Activated CD8-positive, alpha-beta memory T cell treated with anti-CD3 and anti-CD28 coated beads, Interleukin-2, amount 10 ng/mL, durations not matched to agents 7 days and 5 days (primary cell): ENCODE measurements at regions of chr16 and their contacts with region 1.

Region 1: GRCh38 chr16:21708533-21709115 is 44.9 kb downstream of the OTOA start:
- DNase-seq: peak; percentile 91
- ATAC-seq: peak; percentile 83
- H3K4me3 Mint-ChIP-seq: no peak overlapping the region
- H3K27ac Mint-ChIP-seq: no peak overlapping the region
- H3K4me1 Mint-ChIP-seq: peaks cover 9% of the 10 kb centered on the region
- H3K27me3 Mint-ChIP-seq: no peaks in the 10 kb centered on the region

Region 2: GRCh38 chr16:21611546-21612384 is 96.9 kb before region 1 on chr16:
- CTCF ChIA-PET with region 1: no interaction called
- DNase-seq: peak; percentile 45
- ATAC-seq: peak; percentile 48
- H3K4me3 Mint-ChIP-seq: no peak overlapping the region
- H3K27ac Mint-ChIP-seq: peak overlapping the region; percentile 72
- H3K4me1 Mint-ChIP-seq: peaks cover 87% of the 10 kb centered on the region
- H3K27me3 Mint-ChIP-seq: no peaks in the 10 kb centered on the region

Region 3: DNA sequence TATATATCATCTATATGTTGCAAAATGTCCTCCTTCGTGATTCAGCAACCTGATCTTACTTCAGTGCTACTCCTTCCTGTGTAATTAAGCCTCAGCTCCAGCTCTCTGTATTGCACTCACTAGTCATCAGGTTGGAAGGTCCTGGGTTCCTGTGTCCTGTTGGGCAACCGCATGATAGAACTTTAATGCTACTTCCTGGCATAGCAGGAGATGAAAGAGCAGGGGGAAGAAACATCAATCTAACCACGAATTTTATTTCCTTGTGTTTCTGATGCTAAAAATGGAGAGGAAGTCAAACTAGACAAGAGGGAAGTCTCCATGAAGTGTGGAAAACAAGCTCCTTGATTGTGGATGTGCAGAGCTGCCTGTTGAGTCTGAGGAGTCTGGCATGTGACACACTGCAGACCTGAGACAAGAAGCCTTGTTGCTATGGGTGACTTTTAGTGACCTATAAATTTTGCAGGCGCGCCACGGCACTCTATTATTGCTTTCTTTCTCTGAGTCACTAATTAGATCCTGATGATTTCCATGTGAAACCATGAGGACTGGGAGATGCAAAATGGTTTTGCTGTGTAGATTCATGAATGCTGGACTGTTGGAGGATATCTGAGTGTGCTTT is 81.9 kb before region 1 on chr16:
- CTCF ChIA-PET with region 1: no interaction called
- DNase-seq: peak; percentile 62
- ATAC-seq: peak; percentile 82
- H3K4me3 Mint-ChIP-seq: peak overlapping the region; percentile 11
- H3K27ac Mint-ChIP-seq: peak overlapping the region; percentile 79
- H3K4me1 Mint-ChIP-seq: peaks cover 40% of the 10 kb centered on the region
- H3K27me3 Mint-ChIP-seq: no peaks in the 10 kb centered on the region

Region 4: GRCh38 chr16:21638573-21638975 is 70.0 kb before region 1 on chr16:
- CTCF ChIA-PET with region 1: interaction called, 30 read pairs
- DNase-seq: peak; percentile 51
- ATAC-seq: peak; percentile 67
- H3K4me3 Mint-ChIP-seq: no peak overlapping the region
- H3K27ac Mint-ChIP-seq: peak overlapping the region; percentile 79
- H3K4me1 Mint-ChIP-seq: peaks cover 27% of the 10 kb centered on the region
- H3K27me3 Mint-ChIP-seq: no peaks in the 10 kb centered on the region

Region 5: GRCh38 chr16:21719283-21719682 is 10.7 kb after region 1 on chr16:
- CTCF ChIA-PET with region 1: interaction called, 11 read pairs
- DNase-seq: no peak
- ATAC-seq: no peak
- H3K4me3 Mint-ChIP-seq: no peak overlapping the region
- H3K27ac Mint-ChIP-seq: no peak overlapping the region
- H3K4me1 Mint-ChIP-seq: peaks cover 5% of the 10 kb centered on the region
- H3K27me3 Mint-ChIP-seq: no peaks in the 10 kb centered on the region